Pancreas (tissue), 10 donors: ENCODE measurements at regions of chr2 and their contacts with region 1.

Region 1: GRCh38 chr2:37832590-37833197 is 92.4 kb upstream of the RMDN2 start:
- DNase-seq: peak; percentile 69 to 88 (median 81)
- ATAC-seq: peak; percentile 82 to 99 (median 96)
- H3K4me3 ChIP-seq: no peak overlapping the region
- H3K27ac ChIP-seq: no peak overlapping the region
- H3K4me1 ChIP-seq: no peaks in the 10 kb centered on the region
- H3K27me3 ChIP-seq: no peaks in the 10 kb centered on the region
- CTCF ChIP-seq: peak; percentile 40 to 66 (median 63)

Region 2: GRCh38 chr2:37414470-37414949 is 418.2 kb before region 1 on chr2:
- intact Hi-C with region 1: loop called in 2 of 3 experiments (anchors 5 to 10 kb)
- DNase-seq: no peak
- ATAC-seq: peak; percentile 75 to 96 (median 94)
- H3K4me3 ChIP-seq: no peak overlapping the region
- H3K27ac ChIP-seq: no peak overlapping the region
- H3K4me1 ChIP-seq: no peaks in the 10 kb centered on the region
- H3K27me3 ChIP-seq: no peaks in the 10 kb centered on the region
- CTCF ChIP-seq: peak; percentile 26 to 69 (median 58)

Region 3: DNA sequence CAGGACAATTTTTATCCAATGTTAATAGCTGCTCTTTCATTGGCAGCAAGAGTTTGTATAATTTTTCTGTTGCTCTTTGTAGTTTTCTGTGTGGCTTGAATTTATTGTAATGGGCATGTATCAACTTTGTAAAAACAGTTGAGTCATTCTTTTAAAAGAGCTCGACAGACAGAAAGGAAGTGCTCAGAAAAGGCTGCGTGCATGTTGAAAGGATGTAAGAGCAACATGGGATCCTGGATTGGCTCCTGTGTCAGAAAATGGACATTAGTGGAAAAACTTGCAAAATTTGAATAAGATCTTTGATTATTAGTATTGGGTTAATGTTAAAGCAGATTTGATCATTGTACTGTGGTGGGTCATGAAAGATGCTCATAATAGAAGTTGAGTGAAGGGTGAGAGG is 68.0 kb before region 1 on chr2:
- intact Hi-C with region 1: no loop called
- DNase-seq: no peak
- ATAC-seq: no peak
- H3K4me3 ChIP-seq: no peak overlapping the region
- H3K27ac ChIP-seq: no peak overlapping the region
- H3K4me1 ChIP-seq: peaks cover 0 to 4% (median 0%) of the 10 kb centered on the region in 3 donors
- H3K27me3 ChIP-seq: no peaks in the 10 kb centered on the region
- CTCF ChIP-seq: no peak